SK-N-SH (cell line): ENCODE measurements at regions of chr16 and their contacts with region 1.

Region 1: DNA sequence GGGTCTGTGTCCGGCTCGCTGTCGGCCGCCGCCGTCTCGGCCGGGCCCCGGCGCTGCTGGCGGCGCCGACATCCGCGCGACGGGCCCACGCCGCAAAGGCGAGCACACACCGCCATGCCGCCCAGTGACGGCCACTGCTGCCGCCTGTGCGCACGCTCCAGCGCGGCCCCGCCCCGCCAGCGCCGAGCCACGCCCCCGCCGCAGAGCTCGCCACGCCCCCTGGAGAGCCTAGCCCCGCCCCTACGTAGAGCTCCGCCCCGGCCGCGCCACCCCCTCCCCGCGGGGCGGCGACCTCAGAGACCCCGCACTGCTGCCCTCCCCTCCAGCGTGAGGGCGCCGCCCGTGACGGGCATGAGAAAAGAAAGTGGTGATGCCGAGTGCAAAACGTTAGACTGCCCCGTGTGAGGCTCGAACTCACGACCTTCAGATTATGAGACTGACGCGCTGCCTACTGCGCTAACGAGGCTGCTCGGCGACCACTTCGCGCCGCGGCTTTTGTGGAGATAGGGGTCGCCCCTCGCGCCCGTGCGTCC is at the start of gene FBXO31:
- DNase-seq: peak; percentile 95
- H3K4me3 ChIP-seq: peak within 1 kb of the TSS; percentile 65 to 80
- H3K27ac ChIP-seq: peak within 1 kb of the TSS; percentile 84 to 90
- H3K4me1 ChIP-seq: peaks cover 15 to 16% of the 10 kb centered on the region in 2 experiments
- H3K27me3 ChIP-seq: no peaks in the 10 kb centered on the region
- CTCF ChIP-seq: no peak
- EP300 ChIP-seq: no peak; a peak in 1 of 4 replicates
- RAD21 ChIP-seq: no peak
- polyA plus RNA-seq, gene FBXO31: 14.2 and 15.3 TPM in 2 replicates

Region 2: DNA sequence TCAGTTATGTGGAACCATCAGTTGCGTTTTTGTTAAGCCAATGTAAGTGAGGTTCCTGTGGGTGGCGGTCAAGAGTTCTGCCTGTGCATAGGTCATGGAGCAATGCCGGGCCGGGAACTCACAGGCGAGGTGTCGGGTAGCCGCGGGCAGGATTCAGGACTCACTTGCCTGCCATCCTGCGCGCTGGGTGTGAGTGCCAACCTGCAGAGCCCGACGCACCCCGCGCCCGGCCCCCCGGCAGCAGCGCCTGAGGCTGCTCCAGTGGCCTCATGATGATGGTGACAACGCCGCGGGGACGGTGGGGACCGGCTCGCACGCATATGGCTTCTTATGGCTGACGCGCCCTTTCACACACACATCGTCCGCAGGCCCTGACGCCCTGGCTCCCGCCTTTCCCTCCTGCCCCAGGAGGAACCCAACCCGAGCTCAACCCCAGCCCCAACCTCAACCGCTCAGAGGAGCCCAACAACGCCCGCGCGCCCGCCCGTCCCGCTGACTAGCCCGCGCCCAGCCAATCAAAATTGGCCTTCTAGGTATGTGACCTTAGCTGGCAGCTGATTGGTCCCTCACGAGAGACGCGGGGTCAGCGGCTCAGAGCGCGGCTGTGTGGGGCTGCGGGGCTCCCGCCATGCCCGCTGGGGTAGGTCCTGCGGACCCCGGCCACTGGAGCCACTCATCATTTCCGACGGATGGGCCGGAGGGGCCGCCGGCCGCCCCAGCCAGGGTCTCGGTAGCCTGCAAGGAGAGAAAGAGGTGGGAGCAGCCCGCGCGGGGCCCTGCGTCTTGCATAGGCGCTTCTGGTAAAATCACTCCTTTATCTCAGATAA is 66.6 kb before region 1 on chr16 and contains the start of gene C16orf95:
- CTCF ChIA-PET with region 1: interaction called, 36 read pairs
- POLR2A ChIA-PET with region 1: interaction called, 15 read pairs
- DNase-seq: peak; percentile 100
- H3K4me3 ChIP-seq: peak within 1 kb of the TSS; percentile 90 to 93
- H3K27ac ChIP-seq: peak within 1 kb of the TSS; percentile 66 to 85
- H3K4me1 ChIP-seq: peaks cover 0 to 7% of the 10 kb centered on the region in 2 experiments; a peak in 2 of 4 replicates
- H3K27me3 ChIP-seq: no peaks in the 10 kb centered on the region
- CTCF ChIP-seq: peak; percentile 61
- EP300 ChIP-seq: no peak
- RAD21 ChIP-seq: peak; percentile 61
- polyA plus RNA-seq, gene C16orf95: 3.6 and 5.0 TPM in 2 replicates

Region 3: GRCh38 chr16:87324411-87325275 is 59.1 kb before region 1 on chr16:
- CTCF ChIA-PET with region 1: interaction called, 36 read pairs
- POLR2A ChIA-PET with region 1: no interaction called
- DNase-seq: peak; percentile 96
- H3K4me3 ChIP-seq: peak overlapping the region in 1 of 2 experiments; percentile 8; a peak in 1 of 4 replicates
- H3K27ac ChIP-seq: no peak overlapping the region; a peak in 1 of 4 replicates
- H3K4me1 ChIP-seq: peaks cover 0 to 7% of the 10 kb centered on the region in 2 experiments; a peak in 1 of 4 replicates
- H3K27me3 ChIP-seq: no peaks in the 10 kb centered on the region
- CTCF ChIP-seq: peak; percentile 84
- EP300 ChIP-seq: no peak
- RAD21 ChIP-seq: peak; percentile 77

Region 4: GRCh38 chr16:87368029-87368770 is 15.5 kb before region 1 on chr16:
- CTCF ChIA-PET with region 1: interaction called, 5 read pairs
- POLR2A ChIA-PET with region 1: interaction called, 10 read pairs
- DNase-seq: no peak
- H3K4me3 ChIP-seq: no peak overlapping the region
- H3K27ac ChIP-seq: peak overlapping the region in 1 of 2 experiments; percentile 59; a peak in 2 of 4 replicates
- H3K4me1 ChIP-seq: peaks cover 15 to 58% of the 10 kb centered on the region in 2 experiments; a peak in 2 of 4 replicates
- H3K27me3 ChIP-seq: no peaks in the 10 kb centered on the region
- CTCF ChIP-seq: no peak
- EP300 ChIP-seq: no peak
- RAD21 ChIP-seq: no peak